Activated T-helper 2 cell treated with anti-CD3 and anti-CD28 coated beads, Interferon-gamma antibody, Interleukin-2, Interleukin-4, amounts not matched to agents 10 μg/mL and 5 μg/mL and 100 μg/mL, durations not matched to agents 14 hours and 24 hours and 36 hours (primary cell): ENCODE measurements at regions of chr17 and their contacts with region 1.

Region 1: GRCh38 chr17:68539548-68540467 is 27.6 kb downstream of the PRKAR1A start:
- DNase-seq: no peak
- H3K4me3 Mint-ChIP-seq: no peak overlapping the region
- H3K27ac Mint-ChIP-seq: peak overlapping the region; percentile 12
- H3K4me1 Mint-ChIP-seq: no peaks in the 10 kb centered on the region
- H3K27me3 Mint-ChIP-seq: no peaks in the 10 kb centered on the region

Region 2: DNA sequence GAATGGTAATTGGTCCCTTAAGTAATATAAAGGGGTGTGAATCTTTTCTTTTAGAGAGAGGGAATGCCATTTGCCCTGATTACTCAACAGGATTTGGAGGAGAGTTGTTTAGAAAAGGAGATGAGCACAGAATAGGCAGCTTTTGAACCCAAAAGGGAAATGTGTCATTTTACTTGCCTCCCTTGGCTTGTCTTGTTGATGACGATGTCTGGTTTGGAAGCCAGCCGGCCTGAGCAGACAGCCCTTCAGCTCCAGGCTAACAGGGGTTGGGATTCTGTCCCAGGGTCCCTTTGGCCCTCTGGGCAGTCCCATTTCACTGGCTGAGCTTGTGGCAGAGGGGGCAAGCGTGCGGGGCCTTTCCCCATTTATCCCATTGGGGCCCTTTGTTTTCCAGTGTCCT is 49.9 kb before region 1 on chr17:
- intact Hi-C with region 1: no loop called
- DNase-seq: no peak
- H3K4me3 Mint-ChIP-seq: no peak overlapping the region
- H3K27ac Mint-ChIP-seq: no peak overlapping the region
- H3K4me1 Mint-ChIP-seq: peaks cover 23% of the 10 kb centered on the region
- H3K27me3 Mint-ChIP-seq: peaks cover 17% of the 10 kb centered on the region

Region 3: DNA sequence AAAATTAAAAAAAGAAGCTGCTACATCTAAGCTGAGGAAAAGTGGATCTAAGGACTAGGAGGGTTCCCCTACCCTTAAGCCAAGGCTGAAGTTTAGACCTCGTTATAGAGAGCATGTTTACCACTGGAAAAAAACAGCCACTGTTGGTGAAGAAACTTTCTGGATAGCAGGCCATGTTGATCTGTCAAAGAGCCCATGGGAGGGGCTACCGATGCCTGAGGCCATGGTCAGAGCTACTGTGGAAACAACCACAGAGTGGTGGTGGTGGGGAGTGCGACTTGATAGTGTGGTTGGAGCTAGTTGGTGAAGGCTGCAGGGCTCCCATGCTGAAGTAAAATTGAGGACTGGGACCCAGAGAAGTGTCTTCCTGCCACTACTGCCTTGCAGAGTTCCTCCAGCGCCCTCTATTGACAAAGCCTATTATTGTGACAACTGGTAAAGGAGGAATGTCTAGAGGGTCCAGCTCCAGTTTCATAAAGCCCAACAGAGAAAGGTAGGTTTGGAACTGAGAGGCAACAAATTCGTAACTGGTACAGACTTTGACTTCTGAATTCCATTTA is 74.0 kb after region 1 on chr17:
- intact Hi-C with region 1: loop called (anchors 10 kb)
- DNase-seq: no peak
- H3K4me3 Mint-ChIP-seq: no peak overlapping the region
- H3K27ac Mint-ChIP-seq: no peak overlapping the region
- H3K4me1 Mint-ChIP-seq: peaks cover 2% of the 10 kb centered on the region
- H3K27me3 Mint-ChIP-seq: peaks cover 16% of the 10 kb centered on the region

Region 4: DNA sequence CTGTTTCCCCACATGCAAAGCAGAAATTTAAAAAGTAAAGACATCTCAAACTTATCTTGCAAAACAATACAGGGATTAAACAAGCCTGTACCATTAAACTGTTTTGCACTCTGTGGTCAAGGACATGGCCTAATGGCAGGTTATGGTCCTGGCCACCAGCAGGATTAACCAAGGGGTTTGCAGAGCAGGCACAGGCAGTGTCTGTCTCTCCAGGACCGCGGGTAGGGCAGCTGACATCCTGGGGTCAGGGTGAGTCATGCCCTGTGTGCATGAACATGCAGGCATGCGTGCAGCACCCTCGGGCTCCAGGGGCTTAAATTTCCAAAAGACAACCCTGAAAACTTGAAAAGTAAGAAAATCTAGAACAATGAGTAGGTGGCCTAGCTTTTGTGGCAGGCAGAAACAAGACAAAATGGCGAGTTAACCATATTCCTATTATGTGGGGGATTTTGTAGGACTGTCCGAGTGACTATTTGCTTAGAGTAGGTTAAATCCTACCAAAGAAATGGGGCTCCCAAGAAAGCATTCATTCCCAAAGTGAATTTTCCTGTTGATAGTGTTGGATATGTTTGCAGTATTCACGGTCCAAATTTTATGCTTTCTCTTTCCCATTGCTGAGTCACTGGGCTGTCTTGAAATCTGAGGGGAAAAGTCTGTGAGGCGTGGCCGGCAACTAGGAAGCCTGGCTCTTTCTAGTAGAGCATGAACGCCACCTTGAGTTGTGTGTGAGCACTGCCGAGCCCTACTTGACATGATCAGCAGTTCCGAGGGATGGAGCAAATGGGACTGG is 219.7 kb after region 1 on chr17:
- intact Hi-C with region 1: loop called (anchors 10 kb)
- DNase-seq: peak; percentile 40
- H3K4me3 Mint-ChIP-seq: peak overlapping the region; percentile 54
- H3K27ac Mint-ChIP-seq: peak overlapping the region; percentile 8
- H3K4me1 Mint-ChIP-seq: peaks cover 8% of the 10 kb centered on the region
- H3K27me3 Mint-ChIP-seq: peaks cover 3% of the 10 kb centered on the region